ENCODE measurements at regions of chr1 and their contacts with region 1.

Region 1: DNA sequence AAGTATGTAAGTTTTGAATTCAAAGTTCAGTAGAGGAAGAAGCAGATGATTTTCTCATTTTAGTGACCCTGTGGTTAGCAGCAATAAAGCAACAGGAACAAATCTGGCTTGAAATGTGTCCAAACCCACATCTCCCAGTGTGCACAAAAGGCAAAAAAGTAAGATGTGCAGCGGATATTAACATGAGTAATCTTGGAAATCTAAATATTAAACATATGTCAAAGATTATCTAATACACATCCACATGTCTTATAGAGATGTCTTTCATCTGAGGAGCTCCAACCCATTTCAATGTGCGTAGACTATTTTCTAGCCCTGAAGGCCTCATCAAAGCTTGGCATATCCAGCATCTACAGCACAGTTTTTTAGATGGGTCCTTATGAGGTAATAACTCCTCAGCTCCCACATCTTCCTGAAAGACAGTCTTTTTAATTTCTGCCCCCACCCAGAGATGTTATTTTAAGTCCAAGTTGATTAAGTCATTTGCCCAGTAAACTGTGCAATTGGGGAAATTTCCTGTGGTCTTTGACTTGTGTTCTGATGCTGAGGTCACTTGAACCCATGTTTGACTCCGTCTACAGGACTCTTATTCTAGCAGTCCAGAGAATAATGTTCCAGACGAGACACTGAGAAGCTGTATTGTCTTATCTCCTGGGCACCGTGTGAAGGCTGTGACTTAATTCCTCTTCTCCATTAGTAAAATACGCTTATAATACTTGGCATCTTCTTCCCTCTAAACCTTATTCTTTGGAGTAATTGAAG is 73.7 kb downstream of the LMO4 start:
- DNase-seq: no peak
- ATAC-seq: no peak
- H3K4me3 ChIP-seq: no peak overlapping the region
- H3K4me3 Mint-ChIP-seq: no peak overlapping the region
- H3K27ac ChIP-seq: no peak overlapping the region
- H3K27ac Mint-ChIP-seq: no peak overlapping the region
- H3K4me1 ChIP-seq: no peaks in the 10 kb centered on the region
- H3K4me1 Mint-ChIP-seq: peaks cover 4 to 26% (median 12%) of the 10 kb centered on the region in 7 donors
- H3K27me3 ChIP-seq: no peaks in the 10 kb centered on the region
- H3K27me3 Mint-ChIP-seq: peaks cover 0 to 46% (median 0%) of the 10 kb centered on the region in 5 donors

Region 2: DNA sequence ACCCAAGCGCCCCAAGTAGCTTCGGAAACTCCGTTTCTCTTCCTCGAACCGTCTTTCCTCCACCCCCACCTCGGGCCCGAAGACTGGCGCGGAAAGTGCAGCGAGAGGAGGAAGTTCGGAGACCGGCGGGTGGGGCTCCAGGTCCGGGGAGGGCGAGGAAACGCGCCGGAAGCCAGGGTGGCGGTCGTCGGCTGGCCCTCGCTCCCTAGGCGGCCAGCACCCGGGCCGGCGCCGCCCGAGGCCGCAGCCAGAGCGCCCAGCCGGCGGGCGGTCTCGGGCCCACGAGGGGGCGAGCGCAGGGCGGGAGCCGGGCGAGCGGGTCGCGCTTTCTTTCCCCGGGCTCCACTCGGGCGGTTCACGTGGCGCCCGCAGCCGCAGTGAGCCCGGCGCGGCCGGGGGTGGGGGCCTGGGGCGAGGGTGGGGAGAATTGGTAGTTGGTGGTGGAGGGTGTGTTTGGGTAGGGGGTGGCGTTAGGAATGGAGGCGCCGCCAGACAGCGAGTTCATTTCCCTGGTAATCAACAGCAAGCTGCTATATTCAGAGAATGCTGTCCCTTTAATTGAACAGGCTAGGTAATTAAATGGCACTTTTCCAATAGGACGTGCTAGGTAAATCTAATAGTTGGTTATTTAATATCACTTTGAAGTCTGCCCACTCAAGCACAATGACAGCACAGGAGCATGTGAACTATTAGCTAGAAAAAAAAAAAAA is 67.1 kb before region 1 on chr1:
- CTCF ChIA-PET with region 1: no interaction called
- POLR2A ChIA-PET with region 1: no interaction called
- intact Hi-C with region 1: loop called in 1 of 2 experiments (anchors 1 kb)
- DNase-seq: peak; percentile 30 to 68 (median 52)
- ATAC-seq: peak; percentile 68
- H3K4me3 ChIP-seq: peak overlapping the region; percentile 37
- H3K4me3 Mint-ChIP-seq: peak overlapping the region; percentile 81 to 94 (median 90)
- H3K27ac ChIP-seq: peak overlapping the region; percentile 38
- H3K27ac Mint-ChIP-seq: peak overlapping the region; percentile 16 to 95 (median 76)
- H3K4me1 ChIP-seq: peaks cover 28 to 29% of the 10 kb centered on the region in 2 donors
- H3K4me1 Mint-ChIP-seq: peaks cover 19 to 63% (median 46%) of the 10 kb centered on the region in 7 donors
- H3K27me3 ChIP-seq: peaks cover 0 to 10% of the 10 kb centered on the region in 2 donors
- H3K27me3 Mint-ChIP-seq: peaks cover 11 to 45% (median 27%) of the 10 kb centered on the region in 5 donors

Region 3: GRCh38 chr1:87530042-87530807 is 127.8 kb after region 1 on chr1:
- CTCF ChIA-PET with region 1: no interaction called
- POLR2A ChIA-PET with region 1: no interaction called
- intact Hi-C with region 1: no loop called
- DNase-seq: no peak
- ATAC-seq: no peak
- H3K4me3 ChIP-seq: no peak overlapping the region
- H3K4me3 Mint-ChIP-seq: no peak overlapping the region
- H3K27ac ChIP-seq: no peak overlapping the region
- H3K27ac Mint-ChIP-seq: no peak overlapping the region
- H3K4me1 ChIP-seq: no peaks in the 10 kb centered on the region
- H3K4me1 Mint-ChIP-seq: no peaks in the 10 kb centered on the region
- H3K27me3 ChIP-seq: no peaks in the 10 kb centered on the region
- H3K27me3 Mint-ChIP-seq: peaks cover 0 to 8% (median 5%) of the 10 kb centered on the region in 5 donors